Tibial artery (tissue), 4 donors: ENCODE measurements at regions of chr9 and their contacts with region 1.

Region 1: GRCh38 chr9:91361291-91362050 is at the start of gene AUH:
- DNase-seq: peak; percentile 71 to 92
- H3K4me3 ChIP-seq: peak within 1 kb of the TSS; percentile 90
- H3K27ac ChIP-seq: peak within 1 kb of the TSS; percentile 87 to 94
- H3K4me1 ChIP-seq: peaks cover 0 to 31% (median 20%) of the 10 kb centered on the region in 4 donors
- H3K27me3 ChIP-seq: no peaks in the 10 kb centered on the region
- CTCF ChIP-seq: no peak

Region 2: GRCh38 chr9:91422758-91423711 is 61.6 kb after region 1 on chr9:
- intact Hi-C with region 1: loop called (anchors 5 kb)
- DNase-seq: peak; percentile 85 to 93
- H3K4me3 ChIP-seq: peak overlapping the region; percentile 73 to 77
- H3K27ac ChIP-seq: peak overlapping the region; percentile 81 to 89
- H3K4me1 ChIP-seq: peaks cover 0 to 38% (median 21%) of the 10 kb centered on the region in 4 donors
- H3K27me3 ChIP-seq: no peaks in the 10 kb centered on the region
- CTCF ChIP-seq: peak in 1 of 2 experiments; percentile 20

Region 3: GRCh38 chr9:91659529-91660495 is 298.3 kb after region 1 on chr9:
- intact Hi-C with region 1: no loop called
- DNase-seq: no peak
- H3K4me3 ChIP-seq: no peak overlapping the region
- H3K27ac ChIP-seq: no peak overlapping the region
- H3K4me1 ChIP-seq: no peaks in the 10 kb centered on the region
- H3K27me3 ChIP-seq: no peaks in the 10 kb centered on the region
- CTCF ChIP-seq: no peak